Sciatic nerve (tissue), 2 donors: ENCODE measurements at regions of chr6 and their contacts with region 1.

Region 1: GRCh38 chr6:51959744-51960383 is 127.5 kb downstream of the PKHD1 start:
- DNase-seq: peak; percentile 82
- ATAC-seq: peak; percentile 84

Region 2: DNA sequence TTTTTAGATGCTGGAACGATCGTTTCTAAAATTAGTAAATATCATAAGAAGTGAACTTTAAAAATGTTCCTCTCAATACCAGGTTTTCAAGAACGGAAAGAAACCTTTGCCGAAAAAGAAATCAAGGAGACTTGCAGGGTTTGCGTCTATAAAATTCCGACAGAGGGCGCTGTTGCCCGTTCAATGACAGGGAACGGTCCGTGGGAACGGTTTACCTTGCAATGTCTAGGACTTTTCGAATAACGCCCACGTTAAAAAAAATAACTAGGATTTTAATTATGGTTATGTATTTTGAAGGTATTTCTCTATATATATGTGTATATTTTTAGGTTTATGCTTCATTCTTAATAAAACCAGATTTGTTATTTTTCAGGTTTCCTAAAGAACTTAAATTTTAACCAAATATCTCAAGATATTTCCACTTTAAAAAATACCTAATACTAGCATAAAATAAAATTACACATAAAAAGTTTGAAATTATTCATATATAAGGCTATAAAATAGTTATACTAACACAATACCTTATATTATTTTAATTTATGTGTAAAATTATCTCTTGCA is 1143.7 kb before region 1 on chr6:
- intact Hi-C with region 1: loop called (anchors 10 kb)
- DNase-seq: peak; percentile 89
- ATAC-seq: peak; percentile 74

Region 3: GRCh38 chr6:52046456-52046855 is 86.6 kb after region 1 on chr6:
- intact Hi-C with region 1: no loop called
- DNase-seq: no peak
- ATAC-seq: peak; percentile 49

Region 4: GRCh38 chr6:52953911-52954839 is 994.3 kb after region 1 on chr6:
- intact Hi-C with region 1: no loop called
- DNase-seq: no peak
- ATAC-seq: no peak